Activated CD4-positive, alpha-beta T cell treated with anti-CD3 and anti-CD28 coated beads for 36 hours (primary cell): ENCODE measurements at regions of chr2 and their contacts with region 1.

Region 1: DNA sequence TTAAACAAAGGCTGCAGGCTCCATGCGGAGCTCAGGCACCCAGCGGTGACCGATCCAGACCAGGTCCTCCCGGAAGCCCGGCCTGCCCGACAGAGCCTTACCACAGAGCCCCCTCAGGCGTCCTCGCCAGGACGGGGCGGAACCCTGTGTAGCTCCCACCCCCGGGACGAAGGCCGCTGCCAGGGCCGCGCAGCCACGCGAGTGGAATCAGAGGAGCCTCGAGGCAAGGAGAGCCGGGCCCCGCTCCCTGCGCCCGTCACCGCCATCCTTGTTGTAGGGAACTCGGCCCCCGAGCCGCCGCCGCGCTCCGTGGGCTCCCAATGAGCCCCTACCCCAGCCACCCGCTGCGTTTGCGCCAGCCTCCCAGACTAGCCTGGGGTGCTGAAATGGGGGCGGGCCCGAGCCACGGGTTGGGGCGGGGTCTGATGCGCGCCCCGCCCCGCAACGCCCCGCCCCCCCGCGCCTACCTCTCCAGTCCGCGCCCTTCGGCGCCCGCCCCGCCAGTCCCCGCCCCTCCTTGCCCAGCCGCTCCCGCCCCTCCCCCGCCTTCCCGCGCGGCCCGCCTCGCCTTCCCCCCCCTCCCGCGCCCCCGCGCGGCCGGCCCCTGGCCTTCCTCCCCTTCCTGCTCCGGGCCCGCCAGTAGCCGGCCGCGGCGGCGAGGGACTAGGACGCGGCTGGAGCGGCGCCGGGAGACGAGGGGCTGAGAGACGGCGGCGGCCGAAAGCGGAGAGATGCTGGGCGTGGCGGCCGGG is at the start of gene LIMS1:
- DNase-seq: peak; percentile 95
- ATAC-seq: peak; percentile 89
- H3K4me3 Mint-ChIP-seq: peak within 1 kb of the TSS; percentile 89
- H3K27ac Mint-ChIP-seq: peak within 1 kb of the TSS; percentile 89
- H3K4me1 Mint-ChIP-seq: peaks cover 44% of the 10 kb centered on the region
- H3K27me3 Mint-ChIP-seq: no peaks in the 10 kb centered on the region
- total RNA-seq, gene LIMS1: 47.5 to 70.3 TPM

Region 2: DNA sequence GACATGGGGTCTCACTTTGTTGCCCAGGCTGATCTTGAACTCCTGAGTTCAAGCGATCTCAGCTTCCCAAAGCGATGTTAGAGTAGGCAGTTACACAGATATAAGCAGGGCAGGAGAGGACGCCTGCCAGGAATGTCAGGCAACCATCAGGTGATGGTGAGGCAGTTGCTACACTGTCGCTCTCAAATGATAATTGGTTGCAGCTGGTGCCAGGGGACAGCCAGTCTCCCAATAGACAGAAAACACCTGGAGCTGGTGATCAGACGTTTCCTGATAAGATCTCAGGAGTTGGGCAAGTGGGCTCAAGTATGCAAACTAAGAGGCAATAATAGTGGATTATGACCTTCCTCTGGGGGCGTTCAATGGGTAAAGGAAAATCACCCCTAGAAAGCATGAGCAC is 870.4 kb before region 1 on chr2:
- CTCF ChIA-PET with region 1: no interaction called
- POLR2A ChIA-PET with region 1: no interaction called
- intact Hi-C with region 1: no loop called
- DNase-seq: no peak
- ATAC-seq: no peak
- H3K4me3 Mint-ChIP-seq: no peak overlapping the region
- H3K27ac Mint-ChIP-seq: no peak overlapping the region
- H3K4me1 Mint-ChIP-seq: no peaks in the 10 kb centered on the region
- H3K27me3 Mint-ChIP-seq: no peaks in the 10 kb centered on the region

Region 3: DNA sequence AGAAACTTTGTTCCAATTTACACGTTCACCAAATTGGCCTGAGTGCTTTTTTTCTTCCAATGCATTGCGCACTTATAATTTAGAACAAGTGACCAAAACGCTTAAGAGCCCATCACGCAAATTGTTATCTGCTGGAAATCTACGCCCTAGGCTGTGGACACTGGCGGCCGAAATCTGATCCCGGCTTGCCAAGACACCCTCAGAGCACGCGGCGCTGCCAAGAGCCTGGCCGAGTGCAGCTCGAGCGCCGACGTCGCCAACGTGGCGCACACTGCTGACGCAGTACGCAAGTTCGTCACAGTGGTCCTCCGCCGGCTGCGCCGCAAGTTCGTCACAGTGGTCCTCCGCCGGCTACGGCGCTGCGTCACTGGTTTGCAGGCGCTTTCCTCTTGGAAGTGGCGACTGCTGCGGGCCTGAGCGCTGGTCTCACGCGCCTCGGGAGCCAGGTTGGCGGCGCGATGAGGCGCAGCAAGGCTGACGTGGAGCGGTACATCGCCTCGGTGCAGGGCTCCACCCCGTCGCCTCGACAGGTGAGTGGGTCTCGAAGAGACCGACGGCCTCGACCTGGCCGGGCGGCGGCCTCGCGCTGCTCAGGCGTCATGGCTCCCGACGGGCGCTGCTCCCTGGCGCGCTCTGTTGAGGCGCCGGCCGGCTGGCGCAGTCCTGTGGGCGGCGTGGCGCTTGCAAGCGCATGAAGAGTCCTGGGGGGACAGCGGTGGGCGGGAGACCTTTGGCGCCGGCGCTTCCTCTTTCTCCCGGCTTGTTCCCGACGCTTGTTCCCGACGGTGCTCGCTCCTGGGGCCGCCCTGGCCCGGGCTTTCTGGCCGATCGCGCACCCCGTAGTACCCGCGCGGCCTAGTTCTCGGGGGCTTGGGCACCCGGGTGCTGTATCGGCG is 185.4 kb after region 1 on chr2 and contains the start of gene RANBP2:
- CTCF ChIA-PET with region 1: no interaction called
- POLR2A ChIA-PET with region 1: no interaction called
- intact Hi-C with region 1: loop called in 1 of 2 experiments (anchors 1 kb)
- DNase-seq: peak; percentile 97
- ATAC-seq: peak; percentile 97
- H3K4me3 Mint-ChIP-seq: peak within 1 kb of the TSS; percentile 93
- H3K27ac Mint-ChIP-seq: peak within 1 kb of the TSS; percentile 98
- H3K4me1 Mint-ChIP-seq: peaks cover 15% of the 10 kb centered on the region
- H3K27me3 Mint-ChIP-seq: no peaks in the 10 kb centered on the region
- total RNA-seq, gene RANBP2: 68.1 to 77.1 TPM

Region 4: DNA sequence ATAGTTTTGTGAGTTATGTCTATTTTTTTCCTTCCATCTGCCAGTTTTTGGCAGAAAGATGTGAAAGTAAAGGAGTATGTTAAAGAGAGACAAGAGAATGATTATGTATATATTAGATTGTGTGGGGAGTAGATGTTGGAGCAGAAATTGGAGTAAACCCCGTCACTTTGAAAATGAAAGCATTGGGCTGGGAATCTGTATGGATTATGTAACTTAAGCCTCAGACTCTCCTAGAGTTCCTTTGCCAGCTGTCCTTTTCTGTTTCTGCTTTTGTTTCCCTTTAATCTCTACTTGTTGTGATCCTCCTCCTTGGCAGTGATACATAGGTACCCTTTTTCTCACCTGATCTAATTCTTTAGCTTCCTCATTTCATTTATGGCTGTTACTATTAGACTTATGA is 271.8 kb after region 1 on chr2:
- CTCF ChIA-PET with region 1: no interaction called
- POLR2A ChIA-PET with region 1: no interaction called
- intact Hi-C with region 1: no loop called
- DNase-seq: no peak
- ATAC-seq: no peak
- H3K4me3 Mint-ChIP-seq: no peak overlapping the region
- H3K27ac Mint-ChIP-seq: no peak overlapping the region
- H3K4me1 Mint-ChIP-seq: no peaks in the 10 kb centered on the region
- H3K27me3 Mint-ChIP-seq: no peaks in the 10 kb centered on the region